AG04449 (cell line): ENCODE measurements at regions of chr3 and their contacts with region 1.

Region 1: DNA sequence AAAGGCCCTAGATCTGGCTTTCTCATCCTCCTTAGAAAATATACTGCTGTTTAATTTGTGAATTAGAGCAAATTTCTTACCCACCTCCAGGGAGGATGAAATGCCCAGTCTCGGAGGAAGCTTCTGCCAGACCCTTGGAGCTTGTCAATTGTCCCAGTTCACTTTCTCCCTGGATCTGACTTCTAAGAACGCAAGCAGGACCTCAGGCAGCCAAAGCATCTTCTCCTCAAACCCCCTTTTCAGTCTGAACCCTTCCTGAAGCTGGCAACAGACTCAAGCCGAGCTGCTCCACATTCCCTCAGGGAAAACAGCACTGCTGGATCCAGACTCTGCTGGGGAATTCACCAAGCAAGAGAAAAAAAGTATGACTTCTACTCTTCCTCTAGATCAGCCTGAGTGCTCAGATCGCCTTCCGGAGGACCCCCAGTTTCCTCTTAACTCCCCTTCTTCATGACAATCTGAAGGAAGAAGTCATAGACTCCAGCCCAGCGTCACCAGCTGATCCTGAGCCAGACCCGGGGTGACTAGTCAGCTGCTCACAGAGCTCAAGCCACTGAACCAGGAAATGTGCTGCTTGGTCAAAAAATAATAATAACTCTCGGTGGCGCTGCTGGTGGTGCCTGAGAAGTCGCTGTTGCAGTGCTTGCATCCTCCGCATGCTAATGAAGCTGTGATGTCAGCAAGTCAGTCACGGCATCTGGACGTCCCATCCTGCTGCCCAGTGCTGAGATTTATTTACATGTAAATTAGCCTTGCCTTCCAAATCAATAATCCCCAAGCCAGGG is at the start of gene PRICKLE2:
- DNase-seq: peak; percentile 69
- H3K4me3 ChIP-seq: peak within 1 kb of the TSS; percentile 52
- CTCF ChIP-seq: peak; percentile 22

Region 2: GRCh38 chr3:64207289-64208080 is 17.5 kb before region 1 on chr3:
- CTCF ChIA-PET with region 1: interaction called, 18 read pairs
- POLR2A ChIA-PET with region 1: no interaction called
- DNase-seq: no peak
- H3K4me3 ChIP-seq: no peak overlapping the region
- CTCF ChIP-seq: no peak

Region 3: DNA sequence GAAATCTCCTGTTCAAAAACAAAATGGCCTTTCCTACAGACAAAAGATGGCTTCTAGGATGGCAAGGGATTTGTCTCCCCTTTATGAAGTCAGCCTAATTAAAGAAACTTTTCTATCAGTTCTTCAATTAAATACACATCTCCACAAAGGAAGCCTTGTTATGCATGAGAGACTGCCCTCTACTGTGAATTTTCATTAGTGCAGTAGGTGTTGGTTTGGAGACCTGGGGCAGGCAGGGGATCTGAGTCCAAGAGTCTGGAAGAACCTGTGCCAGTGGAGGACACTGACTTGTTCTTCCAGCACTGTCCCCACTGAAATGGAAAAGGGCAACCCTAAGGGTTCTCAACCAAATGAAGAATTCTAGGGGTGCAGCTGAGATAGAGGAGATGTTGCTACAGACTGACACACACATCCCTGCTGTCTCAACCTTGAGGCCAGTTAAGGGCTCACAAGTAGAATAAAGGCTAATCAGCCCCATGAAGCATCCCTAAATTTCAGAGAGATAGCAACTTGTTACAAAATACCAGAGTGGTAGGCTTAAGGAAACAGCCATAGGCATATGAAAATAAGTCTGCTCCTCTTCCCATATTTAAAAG is 174.3 kb after region 1 on chr3:
- CTCF ChIA-PET with region 1: interaction called, 13 read pairs
- POLR2A ChIA-PET with region 1: no interaction called
- DNase-seq: no peak
- H3K4me3 ChIP-seq: no peak overlapping the region
- CTCF ChIP-seq: peak; percentile 68